PC-9 (cell line): ENCODE measurements at regions of chr4 and their contacts with region 1.

Region 1: GRCh38 chr4:20773144-20773997 is 73.1 kb downstream of the PACRGL start:
- DNase-seq: peak in 1 of 2 experiments; percentile 34
- H3K4me3 ChIP-seq: no peak overlapping the region
- H3K27ac ChIP-seq: no peak overlapping the region
- H3K4me1 ChIP-seq: no peaks in the 10 kb centered on the region
- H3K27me3 ChIP-seq: no peaks in the 10 kb centered on the region
- CTCF ChIP-seq: peak; percentile 77

Region 2: GRCh38 chr4:20760053-20760452 is 13.3 kb before region 1 on chr4:
- CTCF ChIA-PET with region 1: no interaction called
- POLR2A ChIA-PET with region 1: no interaction called
- intact Hi-C with region 1: no loop called
- DNase-seq: no peak
- H3K4me3 ChIP-seq: no peak overlapping the region
- H3K27ac ChIP-seq: no peak overlapping the region
- H3K4me1 ChIP-seq: no peaks in the 10 kb centered on the region
- H3K27me3 ChIP-seq: no peaks in the 10 kb centered on the region
- CTCF ChIP-seq: no peak

Region 3: GRCh38 chr4:20890761-20891160 is 117.4 kb after region 1 on chr4:
- CTCF ChIA-PET with region 1: no interaction called
- POLR2A ChIA-PET with region 1: no interaction called
- intact Hi-C with region 1: loop called (anchors 10 kb)
- DNase-seq: no peak
- H3K4me3 ChIP-seq: no peak overlapping the region
- H3K27ac ChIP-seq: no peak overlapping the region
- H3K4me1 ChIP-seq: no peaks in the 10 kb centered on the region
- H3K27me3 ChIP-seq: no peaks in the 10 kb centered on the region
- CTCF ChIP-seq: no peak

Region 4: GRCh38 chr4:21134994-21135393 is 361.6 kb after region 1 on chr4:
- CTCF ChIA-PET with region 1: no interaction called
- POLR2A ChIA-PET with region 1: no interaction called
- intact Hi-C with region 1: loop called (anchors 10 kb)
- DNase-seq: no peak
- H3K4me3 ChIP-seq: no peak overlapping the region
- H3K27ac ChIP-seq: no peak overlapping the region
- H3K4me1 ChIP-seq: no peaks in the 10 kb centered on the region
- H3K27me3 ChIP-seq: no peaks in the 10 kb centered on the region
- CTCF ChIP-seq: peak; percentile 23; the same call in 1 of the 2 replicates

Region 5: DNA sequence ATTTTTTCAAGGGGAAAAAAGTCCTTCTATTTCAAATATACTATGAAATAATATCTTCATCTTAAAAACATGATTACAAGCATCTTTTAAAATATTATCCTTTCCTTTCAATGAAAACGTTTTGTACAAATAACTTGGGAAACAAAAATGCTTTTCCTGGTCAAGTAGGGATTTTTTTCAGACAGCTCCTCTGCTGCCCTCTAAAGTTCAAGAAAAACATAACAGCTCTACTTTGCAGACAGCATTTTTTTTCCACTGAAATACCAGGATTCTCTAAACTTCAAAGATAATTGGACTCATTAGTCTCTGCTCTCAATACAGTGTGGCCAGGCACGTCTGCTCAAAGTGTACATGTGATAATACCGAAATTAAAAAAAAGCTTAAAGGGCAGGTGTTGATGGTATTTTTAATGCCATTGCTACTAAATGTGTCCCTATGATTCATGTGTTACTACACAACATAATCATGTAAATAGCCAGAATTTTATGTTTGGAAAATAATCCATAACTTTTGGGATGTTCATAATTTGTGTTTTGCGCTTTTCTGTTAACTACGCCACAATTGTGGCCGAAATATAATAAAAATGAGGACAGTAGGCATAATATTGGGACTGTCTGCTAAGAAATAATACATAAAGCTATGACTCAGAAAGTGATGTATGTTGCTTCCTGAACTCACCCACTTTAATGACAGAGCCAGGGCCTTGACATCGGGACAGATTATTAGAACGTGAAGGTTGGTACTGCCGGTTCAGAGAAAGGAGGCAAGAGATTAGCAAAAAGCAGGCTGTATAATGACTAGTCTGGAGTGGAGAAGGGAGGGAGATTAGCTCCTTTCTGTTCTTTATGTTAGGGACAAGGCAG is 696.3 kb after region 1 on chr4:
- CTCF ChIA-PET with region 1: no interaction called
- POLR2A ChIA-PET with region 1: no interaction called
- intact Hi-C with region 1: loop called (anchors 5 kb)
- DNase-seq: no peak
- H3K4me3 ChIP-seq: no peak overlapping the region
- H3K27ac ChIP-seq: no peak overlapping the region
- H3K4me1 ChIP-seq: no peaks in the 10 kb centered on the region
- H3K27me3 ChIP-seq: no peaks in the 10 kb centered on the region
- CTCF ChIP-seq: peak; percentile 51

Region 6: DNA sequence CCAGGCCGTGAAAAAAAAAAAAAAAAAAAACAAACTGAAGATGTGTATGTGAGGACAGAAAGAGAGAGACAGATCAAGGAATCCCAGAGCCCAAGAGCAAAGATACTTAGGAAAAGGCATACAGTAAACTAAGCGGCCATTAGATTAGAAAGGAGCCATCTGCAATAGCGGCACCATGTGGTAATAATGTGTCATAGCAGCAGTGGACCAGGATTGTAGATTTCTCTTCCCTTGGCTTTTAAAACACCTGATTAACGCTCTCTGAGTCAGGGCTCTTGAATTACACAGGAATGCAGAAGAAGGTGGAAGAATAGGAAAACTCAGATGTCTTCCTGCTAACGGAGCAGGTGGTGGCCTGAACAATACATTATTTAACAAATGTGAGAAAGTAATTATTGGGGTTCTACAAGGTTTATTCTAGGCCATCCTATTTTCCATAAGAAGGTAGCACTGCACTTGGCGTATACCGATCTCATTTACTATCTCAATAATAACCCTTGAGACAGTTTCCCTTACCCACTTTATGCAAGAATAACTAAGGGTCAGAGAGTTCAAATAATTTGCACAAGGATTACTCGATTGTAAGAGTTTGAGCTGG is 992.5 kb after region 1 on chr4:
- CTCF ChIA-PET with region 1: interaction called, 15 read pairs
- POLR2A ChIA-PET with region 1: no interaction called
- intact Hi-C with region 1: loop called (anchors 5 kb)
- DNase-seq: peak; percentile 49 to 51
- H3K4me3 ChIP-seq: no peak overlapping the region
- H3K27ac ChIP-seq: no peak overlapping the region
- H3K4me1 ChIP-seq: no peaks in the 10 kb centered on the region
- H3K27me3 ChIP-seq: no peaks in the 10 kb centered on the region
- CTCF ChIP-seq: peak; percentile 73